Posterior cingulate gyrus (tissue), 11 donors: ENCODE measurements at regions of chr14 and their contacts with region 1.

Region 1: GRCh38 chr14:67240978-67241414 is 239 bp upstream of the PALS1 start:
- DNase-seq: peak; percentile 93 to 99 (median 96)

Region 2: GRCh38 chr14:66507722-66508546 is 733.1 kb before region 1 on chr14 and contains the start of gene GPHN:
- intact Hi-C with region 1: loop called (anchors 1 kb)
- DNase-seq: peak; percentile 93 to 99 (median 96)

Region 3: GRCh38 chr14:66824251-66824650 is 416.7 kb before region 1 on chr14:
- intact Hi-C with region 1: no loop called
- DNase-seq: no peak

Region 4: GRCh38 chr14:67280506-67280905 is 39.5 kb after region 1 on chr14:
- intact Hi-C with region 1: loop called (anchors 5 kb)
- DNase-seq: no peak

Region 5: DNA sequence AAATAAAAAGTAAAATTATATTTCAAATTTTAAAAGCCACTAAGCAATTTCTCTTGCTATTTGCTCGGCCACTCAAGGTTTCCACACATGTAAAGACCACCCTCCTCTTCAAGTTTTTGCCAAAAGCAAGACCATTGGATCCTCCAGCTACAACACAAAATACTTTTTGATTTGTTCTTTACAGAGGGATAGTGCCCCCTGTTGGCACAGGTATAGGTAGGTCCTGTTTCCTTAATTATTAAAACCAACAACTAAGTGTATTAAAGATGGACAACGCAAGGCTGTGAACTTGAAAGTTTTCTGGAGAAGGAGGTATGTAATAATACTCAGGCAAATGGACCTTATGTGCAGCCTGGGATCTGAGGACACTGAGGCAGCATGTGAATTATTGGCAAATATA is 94.8 kb after region 1 on chr14:
- intact Hi-C with region 1: no loop called
- DNase-seq: no peak

Region 6: DNA sequence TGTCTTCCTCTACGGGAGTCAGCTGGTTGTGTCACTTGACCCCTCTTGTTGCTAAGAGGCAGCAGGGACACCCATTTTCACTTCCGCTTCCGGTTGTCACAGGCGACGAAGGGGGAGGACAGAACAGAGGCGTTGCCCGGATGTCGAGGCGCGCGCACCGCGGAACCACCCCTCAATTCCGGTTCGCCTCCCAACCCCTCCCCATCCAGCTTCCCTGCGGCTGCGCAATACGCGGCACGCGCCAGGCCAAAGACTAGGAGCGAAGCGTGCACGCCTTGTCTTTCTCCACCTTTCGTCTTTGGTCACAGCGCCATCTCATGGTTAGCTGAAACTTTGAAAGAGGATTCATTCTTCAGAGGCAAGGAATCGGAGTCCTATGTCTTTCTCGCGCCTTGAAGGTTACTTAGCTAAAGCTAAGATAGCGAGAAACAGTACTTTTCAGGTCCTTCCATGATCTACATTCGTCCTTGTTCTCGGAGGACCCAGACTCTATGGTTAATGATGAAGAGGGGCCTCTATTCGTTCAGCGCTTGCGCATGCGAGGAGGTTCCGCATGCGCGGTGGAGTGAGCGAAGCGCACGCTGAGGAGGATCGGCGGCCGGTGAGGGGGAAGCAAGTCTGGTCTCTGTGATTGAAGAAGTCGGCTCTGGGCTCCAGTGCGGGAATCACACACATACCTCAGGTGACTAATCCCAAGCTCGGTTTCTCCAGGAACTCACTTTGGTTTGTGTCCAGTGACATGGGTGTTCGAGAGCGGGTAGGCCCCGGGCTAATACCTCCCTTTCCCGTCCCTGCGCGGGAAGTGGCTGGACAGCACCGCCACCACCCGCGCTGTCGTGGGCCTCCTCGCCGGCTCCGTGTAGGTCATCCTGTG is 119.0 kb after region 1 on chr14 and contains the starts of genes ATP6V1D and EIF2S1:
- intact Hi-C with region 1: loop called (anchors 5 kb)
- DNase-seq: peak; percentile 98 to 100 (median 99)